OCI-LY7 (cell line): ENCODE measurements at regions of chr1 and their contacts with region 1.

Region 1: DNA sequence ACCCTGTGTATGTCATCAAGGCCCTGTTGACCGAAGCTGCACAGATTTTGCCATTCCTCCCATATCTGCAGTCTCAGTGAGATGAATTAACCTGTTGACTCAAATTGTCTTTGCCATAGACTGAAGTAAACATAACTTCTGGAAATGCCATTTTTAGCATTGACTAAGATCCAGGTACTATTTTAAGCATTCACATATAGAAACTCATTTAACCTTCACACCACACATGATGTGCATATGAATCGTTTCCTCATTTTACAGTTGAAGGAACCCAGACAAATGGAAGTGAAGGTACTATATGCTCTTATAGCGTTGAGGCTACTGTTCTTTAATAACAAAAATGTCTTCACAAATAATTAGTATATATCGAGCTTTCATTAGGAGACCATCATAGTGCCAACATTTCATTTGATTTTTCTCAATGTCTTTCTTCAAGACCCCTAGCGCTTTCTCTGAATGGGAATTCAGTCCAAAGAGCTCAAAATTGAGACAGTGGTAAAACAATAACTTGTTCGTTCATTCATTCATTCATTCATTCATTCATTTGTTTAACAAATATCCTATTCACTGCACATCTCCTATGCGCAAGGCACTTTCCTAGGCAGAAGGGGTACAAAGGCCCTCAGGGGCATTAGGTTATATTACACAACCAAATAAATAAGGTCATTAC is 444.7 kb downstream of the ADGRL2 start:
- DNase-seq: no peak
- H3K4me3 ChIP-seq: no peak overlapping the region
- H3K27ac ChIP-seq: no peak overlapping the region
- H3K4me1 ChIP-seq: no peaks in the 10 kb centered on the region
- CTCF ChIP-seq: no peak

Region 2: DNA sequence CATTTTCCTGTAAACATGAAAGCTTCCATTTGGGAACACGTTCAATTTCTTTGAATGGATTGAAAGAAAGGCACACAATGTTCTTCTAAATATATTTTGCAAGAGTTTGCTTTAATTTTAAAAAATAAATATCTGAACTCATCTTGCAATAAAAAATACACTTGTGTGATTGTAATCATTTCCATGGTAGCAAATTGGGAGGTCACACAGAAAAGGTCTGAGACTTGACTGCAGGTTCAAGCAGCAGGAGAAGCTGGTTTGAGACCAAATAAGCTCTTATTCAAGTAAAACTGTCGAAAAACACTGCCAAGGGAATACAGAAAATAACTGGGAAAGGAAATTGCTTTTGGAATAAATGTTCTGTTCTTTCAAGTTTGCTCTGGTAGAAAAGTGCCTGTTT is 54.2 kb after region 1 on chr1:
- CTCF ChIA-PET with region 1: no interaction called
- POLR2A ChIA-PET with region 1: no interaction called
- intact Hi-C with region 1: loop called (anchors 2 kb)
- DNase-seq: no peak
- H3K4me3 ChIP-seq: no peak overlapping the region
- H3K27ac ChIP-seq: no peak overlapping the region
- H3K4me1 ChIP-seq: no peaks in the 10 kb centered on the region
- CTCF ChIP-seq: no peak